Activated naive CD4-positive, alpha-beta T cell treated with anti-CD3 and anti-CD28 coated beads for 36 hours (primary cell): ENCODE measurements at regions of chr2 and their contacts with region 1.

Region 1: DNA sequence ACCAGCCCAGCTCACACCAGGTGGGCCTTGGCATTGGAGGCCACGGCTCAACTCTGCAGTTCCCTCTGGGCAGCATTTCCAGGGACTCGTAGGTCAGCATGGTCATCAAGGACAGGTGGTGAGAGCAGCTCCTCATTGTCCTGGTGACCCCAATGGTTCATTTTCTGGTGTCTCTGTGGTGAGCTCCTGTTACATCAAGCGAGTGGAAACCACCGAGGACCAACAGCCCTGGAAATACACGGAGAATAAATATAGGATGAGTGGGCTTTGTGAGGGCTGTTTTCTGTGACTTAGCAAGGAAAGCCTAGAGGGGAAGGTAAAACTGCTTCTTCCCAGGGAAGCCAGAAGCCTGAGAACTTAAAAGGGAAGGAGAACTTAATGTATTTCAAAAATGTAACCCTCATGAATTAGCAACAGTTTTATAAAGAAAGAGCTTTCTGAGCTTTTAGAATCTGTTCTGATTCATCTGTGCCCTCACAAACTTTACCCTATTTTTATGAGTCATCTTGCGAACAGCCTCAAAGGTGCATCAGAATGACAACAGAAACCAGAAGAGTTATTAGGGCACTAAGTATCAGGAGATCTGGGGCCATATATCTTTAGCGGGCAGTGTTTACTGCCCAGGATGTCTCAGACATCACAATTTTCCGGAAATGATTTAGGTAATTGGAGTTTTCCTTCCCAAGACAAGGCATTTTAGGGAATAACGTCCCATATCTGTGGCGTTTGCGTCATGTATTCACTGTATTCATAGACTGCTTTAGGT is 18.7 kb downstream of the C2orf92 start:
- DNase-seq: no peak
- H3K4me3 Mint-ChIP-seq: no peak overlapping the region
- H3K27ac Mint-ChIP-seq: peak overlapping the region; percentile 64
- H3K4me1 Mint-ChIP-seq: peaks cover 15% of the 10 kb centered on the region
- H3K27me3 Mint-ChIP-seq: no peaks in the 10 kb centered on the region

Region 2: DNA sequence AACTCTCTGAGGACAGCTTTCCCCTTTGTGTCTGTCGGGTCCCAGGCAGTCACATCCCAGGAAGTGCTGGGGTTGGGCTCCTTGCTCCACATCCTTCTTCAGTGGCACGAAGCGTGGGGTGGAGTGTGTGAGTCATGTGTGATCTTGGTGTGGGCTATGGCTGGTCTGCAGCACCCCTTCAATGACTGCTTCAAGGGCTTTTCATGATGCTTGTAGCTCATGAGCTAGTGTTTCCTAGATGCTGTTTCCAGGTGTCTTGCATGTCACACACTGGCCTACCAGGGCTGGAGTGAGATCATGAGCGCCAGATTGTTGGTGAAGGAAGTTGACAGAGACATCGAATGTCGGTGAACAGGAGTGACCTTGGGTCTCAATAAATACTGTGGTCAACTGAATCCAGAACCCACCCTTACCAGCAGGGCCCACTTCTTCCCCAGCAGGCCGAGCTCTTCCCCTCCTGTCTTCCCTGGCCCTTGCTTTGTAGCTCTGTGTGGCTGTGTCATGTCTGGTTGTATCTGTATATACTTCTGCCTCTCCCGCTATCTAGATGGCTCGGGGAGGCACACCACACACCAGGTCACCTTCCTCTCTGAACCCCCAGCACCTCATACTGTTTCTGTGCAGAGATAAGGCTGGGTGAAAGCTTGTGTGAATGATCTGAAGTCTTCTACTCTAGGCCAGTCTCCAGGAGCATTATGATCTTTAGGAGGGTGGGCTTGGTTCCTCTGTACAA is 14.9 kb before region 1 on chr2:
- CTCF ChIA-PET with region 1: interaction called, 5 read pairs
- intact Hi-C with region 1: loop called (anchors 1 kb)
- DNase-seq: peak; percentile 57
- H3K4me3 Mint-ChIP-seq: no peak overlapping the region
- H3K27ac Mint-ChIP-seq: peak overlapping the region; percentile 89
- H3K4me1 Mint-ChIP-seq: peaks cover 31% of the 10 kb centered on the region
- H3K27me3 Mint-ChIP-seq: no peaks in the 10 kb centered on the region